ENCODE measurements at regions of chr11 and their contacts with region 1.

Region 1: DNA sequence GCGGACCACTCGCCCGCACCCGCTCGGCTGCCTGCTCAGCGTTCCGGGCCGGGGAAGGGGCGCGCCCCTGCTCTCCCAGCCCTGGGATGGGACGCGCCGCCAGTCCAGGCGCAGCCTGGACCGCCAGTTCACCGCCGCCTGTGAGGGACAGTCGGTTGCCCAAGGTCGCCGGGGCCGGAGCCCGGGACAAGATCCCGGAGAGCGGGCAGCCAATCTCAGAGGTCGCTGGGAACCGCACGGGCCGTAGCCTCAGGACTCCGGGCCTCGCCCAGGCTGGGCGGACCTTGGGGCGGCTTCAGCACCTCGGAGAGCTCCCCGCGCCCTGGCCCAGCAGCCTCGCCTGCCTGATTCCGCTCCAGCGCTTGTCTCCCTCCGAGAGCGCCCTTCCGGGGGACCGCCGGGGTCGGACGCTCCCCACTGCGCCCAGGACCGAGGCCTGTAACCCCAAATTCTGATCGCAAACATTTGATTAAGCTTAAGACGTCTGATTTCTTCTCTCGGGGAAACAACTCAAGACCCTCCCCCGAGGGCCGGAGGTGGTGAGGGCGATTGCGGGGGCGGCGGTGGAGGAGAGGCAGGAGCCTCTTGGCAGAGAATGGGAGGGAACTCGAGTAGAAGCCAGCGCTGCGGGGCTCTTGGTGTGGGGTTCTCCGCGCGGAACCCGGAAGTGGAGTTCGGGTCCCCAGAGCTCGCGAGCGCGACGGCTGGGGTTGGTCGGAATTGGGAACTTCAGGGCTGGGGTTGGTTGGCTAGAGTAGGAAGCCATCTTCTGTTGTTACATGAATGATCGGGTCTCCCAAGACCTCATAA is 1.1 kb upstream of the CHRM4 start:
- DNase-seq: peak; percentile 89
- ATAC-seq: peak; percentile 76
- H3K4me3 Mint-ChIP-seq: peak overlapping the region; percentile 61
- H3K27ac Mint-ChIP-seq: no peak overlapping the region
- H3K4me1 Mint-ChIP-seq: peaks cover 22% of the 10 kb centered on the region
- H3K27me3 Mint-ChIP-seq: peaks cover 37% of the 10 kb centered on the region

Region 2: GRCh38 chr11:46352063-46352841 is 40.4 kb before region 1 on chr11:
- CTCF ChIA-PET with region 1: interaction called, 32 read pairs
- POLR2A ChIA-PET with region 1: no interaction called
- intact Hi-C with region 1: no loop called
- DNase-seq: peak; percentile 88
- ATAC-seq: peak; percentile 39
- H3K4me3 Mint-ChIP-seq: peak overlapping the region; percentile 76
- H3K27ac Mint-ChIP-seq: peak overlapping the region; percentile 94
- H3K4me1 Mint-ChIP-seq: peaks cover 82% of the 10 kb centered on the region
- H3K27me3 Mint-ChIP-seq: no peaks in the 10 kb centered on the region

Region 3: GRCh38 chr11:46380340-46381047 is 12.1 kb before region 1 on chr11:
- CTCF ChIA-PET with region 1: interaction called, 9 read pairs
- POLR2A ChIA-PET with region 1: interaction called, 3 read pairs
- intact Hi-C with region 1: loop called in 1 of 2 experiments (anchors 1 kb)
- DNase-seq: peak; percentile 90
- ATAC-seq: peak; percentile 65
- H3K4me3 Mint-ChIP-seq: peak overlapping the region; percentile 72
- H3K27ac Mint-ChIP-seq: peak overlapping the region; percentile 58
- H3K4me1 Mint-ChIP-seq: peaks cover 8% of the 10 kb centered on the region
- H3K27me3 Mint-ChIP-seq: peaks cover 8% of the 10 kb centered on the region

Region 4: GRCh38 chr11:46537537-46538295 is 145.1 kb after region 1 on chr11:
- CTCF ChIA-PET with region 1: interaction called, 3 read pairs
- POLR2A ChIA-PET with region 1: no interaction called
- intact Hi-C with region 1: loop called (anchors 1 to 5 kb)
- DNase-seq: peak; percentile 79
- ATAC-seq: peak; percentile 99
- H3K4me3 Mint-ChIP-seq: no peak overlapping the region
- H3K27ac Mint-ChIP-seq: peak overlapping the region; percentile 24
- H3K4me1 Mint-ChIP-seq: peaks cover 18% of the 10 kb centered on the region
- H3K27me3 Mint-ChIP-seq: no peaks in the 10 kb centered on the region

Measured in activated CD4-positive, alpha-beta T cell treated with anti-CD3 and anti-CD28 coated beads for 36 hours (primary cell).